Psoas muscle (tissue), 8 donors: ENCODE measurements at regions of chrX and their contacts with region 1.

Region 1: DNA sequence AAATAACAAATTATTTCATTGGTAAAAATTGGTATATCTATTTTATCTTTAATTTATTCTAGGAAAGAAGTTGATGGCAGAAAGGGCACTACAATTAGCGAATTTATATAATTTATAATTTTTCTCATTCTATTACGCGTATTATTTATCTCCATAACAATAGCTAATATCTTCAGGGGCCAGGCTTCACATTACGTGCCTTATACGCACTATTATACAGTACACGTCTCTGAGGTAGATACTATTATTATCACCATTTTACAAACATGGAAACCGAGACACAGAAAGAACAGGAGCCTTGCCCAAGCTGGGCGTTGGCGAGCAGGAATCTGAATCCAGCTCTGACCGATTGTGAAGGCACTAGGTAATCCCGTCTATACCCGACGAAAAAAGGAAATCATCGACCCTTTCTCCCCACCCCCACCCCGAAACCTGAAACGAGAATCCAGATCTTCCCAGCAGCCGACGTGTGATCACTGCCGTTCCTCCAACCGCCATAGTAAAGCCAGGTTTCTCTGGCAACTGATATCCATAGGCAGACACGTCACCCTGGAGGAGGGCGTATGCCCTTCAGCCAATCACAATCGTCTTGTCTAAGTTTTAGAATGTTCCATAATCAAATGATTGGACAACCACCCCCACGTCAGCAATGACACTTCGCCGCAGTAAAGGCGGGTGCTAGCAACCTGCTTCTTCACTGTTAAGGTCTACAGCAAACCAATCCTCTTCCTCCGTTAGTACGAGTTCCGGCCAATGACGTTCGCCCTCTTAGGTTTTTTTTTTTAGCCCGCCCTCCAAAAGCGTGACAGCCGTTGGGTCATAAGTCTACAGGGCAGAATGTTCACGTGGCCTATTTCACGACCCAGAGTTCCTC is at the start of gene MORF4L2:
- DNase-seq: peak; percentile 85 to 93
- ATAC-seq: peak; percentile 87 to 90 (median 88)
- H3K4me3 ChIP-seq: peak within 1 kb of the TSS; percentile 71
- H3K27ac ChIP-seq: peak within 1 kb of the TSS; percentile 87
- H3K4me1 ChIP-seq: peaks cover 5% of the 10 kb centered on the region
- H3K27me3 ChIP-seq: no peaks in the 10 kb centered on the region
- CTCF ChIP-seq: no peak
- total RNA-seq, gene MORF4L2: 182 to 273 (median 218) TPM

Region 2: DNA sequence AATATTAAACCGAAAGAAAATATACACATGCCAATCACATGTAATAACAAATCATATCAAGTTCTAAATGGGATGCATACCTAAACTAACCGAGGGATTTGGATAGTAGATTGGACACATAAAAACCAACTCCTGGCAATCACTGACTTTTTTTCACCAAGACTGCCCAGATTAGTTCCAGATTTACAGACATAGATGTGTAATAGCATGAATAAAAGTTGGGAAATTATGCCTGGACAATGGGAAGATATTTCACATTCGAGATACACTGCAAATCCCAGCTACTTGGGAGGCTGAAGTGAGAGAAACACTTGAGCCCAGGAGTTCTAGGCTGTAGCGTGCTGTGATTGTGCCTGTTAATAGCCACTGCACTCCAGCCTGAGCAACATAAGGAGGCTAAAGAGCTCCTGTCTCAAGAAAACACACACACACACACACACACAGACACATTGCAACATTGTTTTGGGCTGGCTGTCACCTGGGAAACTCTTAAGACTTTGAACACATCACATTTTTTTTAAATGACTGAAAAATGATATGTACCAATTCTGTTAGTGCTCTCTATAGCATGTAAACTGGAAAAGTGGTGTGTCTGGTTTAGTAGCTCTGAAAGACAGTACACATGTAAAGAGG is 172.8 kb before region 1 on chrX:
- intact Hi-C with region 1: no loop called
- DNase-seq: no peak
- ATAC-seq: no peak
- H3K4me3 ChIP-seq: no peak overlapping the region
- H3K27ac ChIP-seq: no peak overlapping the region
- H3K4me1 ChIP-seq: no peaks in the 10 kb centered on the region
- H3K27me3 ChIP-seq: peaks cover 0 to 3% (median 0%) of the 10 kb centered on the region in 3 donors
- CTCF ChIP-seq: no peak

Region 3: DNA sequence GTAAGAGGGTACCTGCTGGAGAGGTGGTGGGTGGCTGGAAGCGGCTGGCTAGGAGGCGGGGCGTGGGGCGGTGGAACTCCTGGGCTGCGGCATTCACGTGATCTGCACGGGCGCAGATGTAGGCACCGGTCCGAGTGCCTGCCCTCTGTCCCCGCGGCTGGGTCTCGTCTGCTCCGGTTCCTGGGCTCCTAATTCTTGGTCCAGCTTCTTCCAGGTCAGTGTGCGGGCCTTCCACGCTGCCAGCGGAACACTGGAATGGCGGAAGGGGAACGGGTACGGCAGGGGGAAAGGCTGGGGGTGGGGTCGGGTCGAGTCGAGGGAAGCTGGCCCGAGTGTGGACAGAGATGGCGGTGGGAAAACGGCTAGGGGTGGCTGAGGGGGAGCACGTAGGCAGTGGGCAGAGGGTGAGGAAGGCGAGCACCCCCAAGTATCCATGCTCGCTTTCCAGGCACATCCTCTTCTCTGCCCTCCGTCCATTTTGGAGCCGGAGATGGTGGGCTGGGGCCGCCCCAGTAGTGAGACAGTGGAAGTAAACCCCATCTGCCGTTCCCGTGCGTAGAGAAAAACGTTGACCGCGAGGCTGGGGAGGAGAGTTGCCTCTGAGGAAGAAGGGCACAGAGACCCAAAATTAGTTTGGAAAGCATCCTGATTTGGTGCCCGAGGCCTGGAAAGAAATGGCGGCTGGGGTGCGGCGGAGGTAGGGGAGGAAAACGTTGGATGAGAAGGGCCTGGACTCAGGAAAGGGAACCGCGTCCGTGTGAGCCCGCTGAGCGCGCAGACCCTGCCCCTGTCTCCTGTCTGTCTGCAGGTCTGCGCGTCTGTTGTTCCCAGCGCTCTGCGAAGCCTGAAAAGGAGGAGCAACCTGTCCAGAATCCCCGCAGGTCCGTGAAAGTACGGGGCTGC is 100.8 kb before region 1 on chrX and contains the start of gene TCEAL4:
- intact Hi-C with region 1: no loop called
- DNase-seq: peak; percentile 46 to 75
- ATAC-seq: peak; percentile 86 to 96 (median 91)
- H3K4me3 ChIP-seq: peak within 1 kb of the TSS; percentile 75
- H3K27ac ChIP-seq: peak within 1 kb of the TSS; percentile 71
- H3K4me1 ChIP-seq: no peaks in the 10 kb centered on the region
- H3K27me3 ChIP-seq: peaks cover 0 to 6% (median 0%) of the 10 kb centered on the region in 3 donors
- CTCF ChIP-seq: no peak
- total RNA-seq, gene TCEAL4: 32.1 to 50.0 (median 36.3) TPM

Region 4: DNA sequence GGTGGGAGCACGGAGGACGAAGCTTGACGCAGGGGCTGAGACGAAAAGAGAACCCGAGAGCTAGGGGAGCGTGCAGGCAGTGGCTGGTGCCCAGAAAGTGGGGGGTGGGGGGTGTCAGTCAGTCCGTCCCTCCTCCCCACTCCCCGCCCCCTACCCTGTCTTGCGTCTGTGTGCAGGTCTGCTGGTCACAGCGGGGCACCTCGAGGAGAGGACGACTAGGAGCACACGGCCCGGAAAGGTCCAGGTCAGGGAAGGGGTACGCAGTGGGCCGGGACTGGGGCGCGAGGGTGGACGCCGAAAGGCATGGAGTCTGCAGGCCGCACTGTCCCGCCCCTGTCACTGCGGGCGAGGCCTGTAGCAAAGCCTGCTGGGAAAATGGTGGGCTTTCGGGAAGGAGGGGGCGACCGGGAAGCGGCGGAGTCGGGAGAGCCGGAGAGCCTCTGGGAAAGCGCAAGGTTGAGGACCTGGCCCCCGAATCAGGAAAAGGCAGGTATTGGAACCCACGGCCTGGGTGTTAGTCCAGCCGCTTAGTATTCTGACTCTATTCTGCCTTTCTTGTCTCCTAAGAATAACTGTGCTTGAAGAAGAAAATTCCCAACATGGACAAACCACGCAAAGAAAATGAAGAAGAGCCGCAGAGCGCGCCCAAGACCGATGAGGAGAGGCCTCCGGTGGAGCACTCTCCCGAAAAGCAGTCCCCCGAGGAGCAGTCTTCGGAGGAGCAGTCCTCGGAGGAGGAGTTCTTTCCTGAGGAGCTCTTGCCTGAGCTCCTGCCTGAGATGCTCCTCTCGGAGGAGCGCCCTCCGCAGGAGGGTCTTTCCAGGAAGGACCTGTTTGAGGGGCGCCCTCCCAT is 56.9 kb before region 1 on chrX:
- intact Hi-C with region 1: loop called (anchors 5 to 10 kb)
- DNase-seq: peak; percentile 65 to 71
- ATAC-seq: peak; percentile 79 to 89 (median 82)
- H3K4me3 ChIP-seq: peak overlapping the region; percentile 78
- H3K27ac ChIP-seq: peak overlapping the region; percentile 87
- H3K4me1 ChIP-seq: peaks cover 9% of the 10 kb centered on the region
- H3K27me3 ChIP-seq: peaks cover 0 to 10% (median 0%) of the 10 kb centered on the region in 3 donors
- CTCF ChIP-seq: peak; percentile 20

Region 5: GRCh38 chrX:103774070-103774642 is 87.7 kb after region 1 on chrX:
- intact Hi-C with region 1: loop called in 1 of 2 experiments (anchors 5 kb)
- DNase-seq: no peak
- ATAC-seq: peak; percentile 55 to 79 (median 68)
- H3K4me3 ChIP-seq: no peak overlapping the region
- H3K27ac ChIP-seq: no peak overlapping the region
- H3K4me1 ChIP-seq: no peaks in the 10 kb centered on the region
- H3K27me3 ChIP-seq: peaks cover 0 to 23% (median 0%) of the 10 kb centered on the region in 3 donors
- CTCF ChIP-seq: peak; percentile 40

Region 6: DNA sequence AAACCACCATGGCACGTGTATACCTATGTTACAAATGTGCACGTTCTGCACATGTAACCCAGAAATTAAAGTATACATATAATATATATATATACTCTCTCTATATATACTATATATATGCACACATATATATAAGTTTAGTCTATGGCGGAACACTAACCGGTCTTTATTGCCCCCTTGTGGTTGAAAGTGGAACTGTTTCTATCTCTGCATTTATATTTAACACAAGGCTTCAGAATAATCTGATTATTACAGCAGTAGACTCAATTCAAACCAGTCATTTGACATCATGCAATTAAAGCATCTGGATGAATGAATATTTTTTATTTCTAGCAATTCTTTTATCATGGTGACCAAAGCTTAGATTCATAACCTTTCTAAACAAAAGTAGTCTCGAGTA is 131.1 kb after region 1 on chrX:
- intact Hi-C with region 1: loop called (anchors 5 kb)
- DNase-seq: no peak
- ATAC-seq: peak in 1 of 4 donors; percentile 42
- H3K4me3 ChIP-seq: no peak overlapping the region
- H3K27ac ChIP-seq: no peak overlapping the region
- H3K4me1 ChIP-seq: no peaks in the 10 kb centered on the region
- H3K27me3 ChIP-seq: no peaks in the 10 kb centered on the region
- CTCF ChIP-seq: peak; percentile 82